CD8-positive, alpha-beta T cell (primary cell): ENCODE measurements at regions of chr6 and their contacts with region 1.

Region 1: GRCh38 chr6:137313928-137314855 is 95.0 kb upstream of the IFNGR1 start:
- DNase-seq: peak; percentile 43 to 84 (median 73)
- ATAC-seq: peak; percentile 73
- H3K4me3 ChIP-seq: no peak overlapping the region
- H3K4me3 Mint-ChIP-seq: no peak overlapping the region
- H3K27ac ChIP-seq: no peak overlapping the region
- H3K27ac Mint-ChIP-seq: no peak overlapping the region
- H3K4me1 ChIP-seq: no peaks in the 10 kb centered on the region
- H3K4me1 Mint-ChIP-seq: peaks cover 8% of the 10 kb centered on the region
- H3K27me3 ChIP-seq: no peaks in the 10 kb centered on the region
- H3K27me3 Mint-ChIP-seq: no peaks in the 10 kb centered on the region
- CTCF ChIP-seq: peak; percentile 73

Region 2: DNA sequence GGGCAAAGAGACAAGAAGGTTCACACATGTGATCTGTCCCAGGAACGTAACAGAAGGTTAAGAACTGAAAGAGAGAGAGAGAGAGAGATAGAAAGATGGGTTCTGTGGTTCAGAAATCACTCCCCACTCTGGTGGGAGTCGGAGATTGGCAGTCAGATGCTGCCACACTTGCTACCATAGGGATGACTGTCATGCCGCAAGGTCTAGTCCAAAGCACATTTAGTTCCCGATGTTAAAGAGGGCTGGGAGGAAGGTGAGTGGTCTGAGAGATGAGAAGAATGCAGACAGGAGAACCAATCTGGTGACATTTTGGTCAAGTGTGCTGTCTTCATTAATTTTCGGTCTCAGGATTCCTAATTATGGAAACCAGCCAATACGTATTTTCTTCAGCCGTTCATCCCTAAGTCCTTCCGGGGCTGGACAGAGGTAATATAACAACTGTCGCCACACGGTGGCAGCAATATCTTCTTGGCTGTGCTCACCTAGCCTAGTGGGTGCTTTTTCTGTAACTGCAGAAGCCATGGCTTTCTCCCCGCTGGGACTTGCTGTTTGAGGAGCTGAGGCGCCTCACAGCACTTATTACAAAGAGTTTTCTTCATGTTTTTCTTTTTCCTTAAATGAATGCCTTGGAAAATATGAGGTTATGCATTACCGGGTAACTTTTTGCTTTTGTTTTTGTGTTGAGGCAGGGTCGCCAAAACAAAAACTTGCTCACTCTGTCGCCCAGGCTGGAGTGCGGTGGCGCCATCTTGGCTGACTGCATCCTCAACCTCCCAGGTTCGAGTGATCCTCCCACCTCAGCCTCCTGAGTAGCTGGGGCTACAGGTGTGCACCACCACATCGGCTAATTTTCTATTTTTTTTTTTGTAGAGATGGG is 346.1 kb before region 1 on chr6:
- CTCF ChIA-PET with region 1: no interaction called
- POLR2A ChIA-PET with region 1: no interaction called
- intact Hi-C with region 1: loop called (anchors 1 to 2 kb)
- DNase-seq: peak; percentile 19 to 74 (median 60)
- ATAC-seq: peak; percentile 61
- H3K4me3 ChIP-seq: no peak overlapping the region
- H3K4me3 Mint-ChIP-seq: no peak overlapping the region
- H3K27ac ChIP-seq: no peak overlapping the region
- H3K27ac Mint-ChIP-seq: no peak overlapping the region
- H3K4me1 ChIP-seq: peaks cover 4% of the 10 kb centered on the region
- H3K4me1 Mint-ChIP-seq: no peaks in the 10 kb centered on the region
- H3K27me3 ChIP-seq: no peaks in the 10 kb centered on the region
- H3K27me3 Mint-ChIP-seq: peaks cover 32% of the 10 kb centered on the region
- CTCF ChIP-seq: peak; percentile 59

Region 3: DNA sequence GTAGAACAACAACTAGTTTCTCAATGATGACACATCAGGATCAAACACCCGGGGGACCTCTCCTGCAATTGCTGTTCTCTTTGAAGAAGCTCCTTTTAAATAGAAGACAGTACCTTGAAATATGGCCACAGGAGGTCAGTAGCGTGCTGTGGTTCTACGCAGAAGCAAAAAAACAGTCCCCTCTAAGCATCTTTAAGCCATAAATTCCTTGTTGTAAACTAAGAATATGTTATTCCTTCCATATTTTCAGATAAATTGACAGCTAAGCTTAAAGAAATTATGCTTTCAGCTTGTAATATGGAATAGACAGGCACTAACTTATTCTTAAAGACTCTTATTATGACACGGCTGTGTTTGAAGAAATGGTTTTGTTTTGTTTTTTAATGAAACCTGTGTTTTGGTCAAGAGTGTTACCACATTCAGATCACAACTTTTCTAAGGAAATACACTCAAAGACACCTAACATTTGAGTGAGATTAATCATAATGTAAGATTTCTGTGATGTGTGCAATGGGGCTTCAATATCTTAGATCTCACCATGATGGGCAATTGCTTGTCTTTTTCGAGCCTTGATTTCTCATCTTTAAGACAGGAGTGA is 219.7 kb before region 1 on chr6:
- CTCF ChIA-PET with region 1: interaction called, 63 read pairs
- POLR2A ChIA-PET with region 1: interaction called, 4 read pairs
- intact Hi-C with region 1: loop called (anchors 1 kb)
- DNase-seq: peak; percentile 14 to 79 (median 54)
- ATAC-seq: peak; percentile 67
- H3K4me3 ChIP-seq: no peak overlapping the region
- H3K4me3 Mint-ChIP-seq: no peak overlapping the region
- H3K27ac ChIP-seq: no peak overlapping the region
- H3K27ac Mint-ChIP-seq: peak overlapping the region; percentile 37
- H3K4me1 ChIP-seq: no peaks in the 10 kb centered on the region
- H3K4me1 Mint-ChIP-seq: peaks cover 18% of the 10 kb centered on the region
- H3K27me3 ChIP-seq: no peaks in the 10 kb centered on the region
- H3K27me3 Mint-ChIP-seq: peaks cover 3% of the 10 kb centered on the region
- CTCF ChIP-seq: peak; percentile 71

Region 4: GRCh38 chr6:137271245-137272183 is 42.7 kb before region 1 on chr6:
- CTCF ChIA-PET with region 1: interaction called, 13 read pairs
- POLR2A ChIA-PET with region 1: no interaction called
- intact Hi-C with region 1: loop called (anchors 1 to 2 kb)
- DNase-seq: peak in 2 of 9 experiments; percentile 56 to 66
- ATAC-seq: peak; percentile 69
- H3K4me3 ChIP-seq: no peak overlapping the region
- H3K4me3 Mint-ChIP-seq: no peak overlapping the region
- H3K27ac ChIP-seq: no peak overlapping the region
- H3K27ac Mint-ChIP-seq: no peak overlapping the region
- H3K4me1 ChIP-seq: no peaks in the 10 kb centered on the region
- H3K4me1 Mint-ChIP-seq: peaks cover 17% of the 10 kb centered on the region
- H3K27me3 ChIP-seq: no peaks in the 10 kb centered on the region
- H3K27me3 Mint-ChIP-seq: peaks cover 2% of the 10 kb centered on the region
- CTCF ChIP-seq: peak; percentile 95

Region 5: DNA sequence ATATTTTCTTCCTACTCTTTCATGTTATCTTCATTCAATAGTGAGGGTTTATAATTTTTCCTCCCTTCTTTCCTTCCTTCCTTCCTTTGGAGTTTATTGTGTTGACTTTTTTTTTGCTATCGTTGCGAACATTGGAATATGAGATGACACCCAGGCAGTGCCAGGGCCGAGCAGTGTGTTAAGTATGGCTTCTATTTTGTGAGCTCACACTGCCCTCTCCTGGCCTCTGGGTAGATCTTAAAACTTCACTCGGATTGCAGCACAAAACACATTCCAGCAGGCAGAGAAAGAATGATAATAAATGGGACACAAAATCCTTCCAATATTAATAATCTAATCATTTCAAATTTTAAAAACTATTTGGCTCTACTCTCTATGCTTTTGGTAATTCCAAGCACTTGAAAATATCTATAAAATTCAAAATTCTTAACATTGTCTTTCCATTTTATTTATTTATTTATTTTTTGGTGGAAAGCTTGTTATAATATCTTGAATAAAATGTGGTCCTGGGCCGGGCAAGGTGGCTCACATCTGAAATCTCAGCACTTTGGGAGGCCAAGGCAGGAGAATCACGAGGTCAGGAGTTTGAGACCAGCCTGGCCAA is 327.4 kb after region 1 on chr6:
- CTCF ChIA-PET with region 1: no interaction called
- POLR2A ChIA-PET with region 1: no interaction called
- intact Hi-C with region 1: loop called in 1 of 2 experiments (anchors 1 kb)
- DNase-seq: peak; percentile 41 to 83 (median 64)
- ATAC-seq: peak; percentile 74
- H3K4me3 ChIP-seq: no peak overlapping the region
- H3K4me3 Mint-ChIP-seq: no peak overlapping the region
- H3K27ac ChIP-seq: no peak overlapping the region
- H3K27ac Mint-ChIP-seq: no peak overlapping the region
- H3K4me1 ChIP-seq: no peaks in the 10 kb centered on the region
- H3K4me1 Mint-ChIP-seq: peaks cover 13% of the 10 kb centered on the region
- H3K27me3 ChIP-seq: no peaks in the 10 kb centered on the region
- H3K27me3 Mint-ChIP-seq: peaks cover 2% of the 10 kb centered on the region
- CTCF ChIP-seq: peak; percentile 77

Region 6: GRCh38 chr6:137883400-137884148 is 569.4 kb after region 1 on chr6:
- CTCF ChIA-PET with region 1: no interaction called
- POLR2A ChIA-PET with region 1: no interaction called
- intact Hi-C with region 1: no loop called
- DNase-seq: peak in 5 of 9 experiments; percentile 55 to 83 (median 61)
- ATAC-seq: peak; percentile 36
- H3K4me3 ChIP-seq: no peak overlapping the region
- H3K4me3 Mint-ChIP-seq: peak overlapping the region; percentile 20
- H3K27ac ChIP-seq: peak overlapping the region; percentile 26 to 73
- H3K27ac Mint-ChIP-seq: peak overlapping the region; percentile 90
- H3K4me1 ChIP-seq: peaks cover 41% of the 10 kb centered on the region
- H3K4me1 Mint-ChIP-seq: peaks cover 46% of the 10 kb centered on the region
- H3K27me3 ChIP-seq: no peaks in the 10 kb centered on the region
- H3K27me3 Mint-ChIP-seq: no peaks in the 10 kb centered on the region
- CTCF ChIP-seq: no peak